ENCODE measurements at regions of chr12 and their contacts with region 1.

Region 1: GRCh38 chr12:15276088-15276698 is 46.1 kb upstream of the PTPRO start:
- DNase-seq: peak in 3 of 10 donors; percentile 22 to 48 (median 32)

Region 2: DNA sequence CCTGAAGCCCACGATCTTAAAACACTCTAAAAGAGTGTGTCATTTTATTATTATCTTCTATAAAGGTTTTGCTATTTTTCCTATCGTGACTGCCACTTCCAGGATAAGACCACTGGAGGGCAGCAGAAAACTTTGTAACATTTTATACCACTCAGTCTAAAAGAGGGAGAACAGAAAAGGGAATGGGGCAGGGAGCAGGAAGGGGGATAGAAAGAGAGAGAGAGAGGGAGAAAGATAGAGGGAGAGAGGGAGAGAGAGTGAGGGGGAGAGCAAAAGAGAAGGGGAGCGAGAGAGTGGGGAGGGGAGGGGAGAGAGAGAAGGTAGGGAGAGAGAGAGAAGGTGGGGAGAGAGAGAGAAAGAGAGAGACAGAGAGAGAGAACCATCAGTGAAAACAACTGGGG is 430.8 kb before region 1 on chr12:
- intact Hi-C with region 1: loop called (anchors 10 kb)
- DNase-seq: peak in 3 of 10 donors; percentile 24 to 40 (median 31)

Region 3: GRCh38 chr12:15522565-15523187 is 246.5 kb after region 1 on chr12:
- intact Hi-C with region 1: loop called (anchors 1 kb)
- DNase-seq: no peak

Region 4: DNA sequence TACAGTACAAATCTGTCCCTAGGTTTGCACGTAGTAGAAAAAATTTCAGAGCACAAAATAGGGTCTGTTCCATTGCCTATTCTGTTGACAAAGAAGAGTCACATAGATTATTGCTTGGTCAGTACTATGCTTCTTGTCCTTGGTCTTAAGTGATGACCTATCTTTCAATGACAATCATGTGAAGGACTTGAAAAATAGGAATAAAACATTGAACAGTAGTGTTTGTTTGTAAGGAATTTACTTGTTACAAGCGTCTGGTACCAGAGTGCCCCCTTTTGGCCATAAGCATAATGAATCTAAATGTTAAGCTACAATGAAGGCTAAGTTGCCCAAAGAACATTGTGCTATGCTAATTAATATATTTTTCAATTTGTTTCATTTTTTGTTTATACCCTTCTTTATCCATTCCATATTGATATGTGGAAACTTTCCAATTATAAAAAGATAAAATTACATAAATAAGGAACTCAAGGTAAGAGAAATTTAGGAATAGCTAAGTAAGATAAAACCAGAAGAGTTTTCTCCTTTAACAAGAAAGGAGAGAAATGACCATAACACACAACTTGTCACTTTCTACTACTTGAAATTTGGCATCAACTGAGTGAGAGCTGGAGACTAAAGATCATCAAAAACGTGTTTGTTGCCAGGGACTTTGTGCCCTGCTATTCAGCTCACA is 308.3 kb after region 1 on chr12:
- intact Hi-C with region 1: loop called (anchors 2 kb)
- DNase-seq: peak in 1 of 10 donors; percentile 36

Region 5: DNA sequence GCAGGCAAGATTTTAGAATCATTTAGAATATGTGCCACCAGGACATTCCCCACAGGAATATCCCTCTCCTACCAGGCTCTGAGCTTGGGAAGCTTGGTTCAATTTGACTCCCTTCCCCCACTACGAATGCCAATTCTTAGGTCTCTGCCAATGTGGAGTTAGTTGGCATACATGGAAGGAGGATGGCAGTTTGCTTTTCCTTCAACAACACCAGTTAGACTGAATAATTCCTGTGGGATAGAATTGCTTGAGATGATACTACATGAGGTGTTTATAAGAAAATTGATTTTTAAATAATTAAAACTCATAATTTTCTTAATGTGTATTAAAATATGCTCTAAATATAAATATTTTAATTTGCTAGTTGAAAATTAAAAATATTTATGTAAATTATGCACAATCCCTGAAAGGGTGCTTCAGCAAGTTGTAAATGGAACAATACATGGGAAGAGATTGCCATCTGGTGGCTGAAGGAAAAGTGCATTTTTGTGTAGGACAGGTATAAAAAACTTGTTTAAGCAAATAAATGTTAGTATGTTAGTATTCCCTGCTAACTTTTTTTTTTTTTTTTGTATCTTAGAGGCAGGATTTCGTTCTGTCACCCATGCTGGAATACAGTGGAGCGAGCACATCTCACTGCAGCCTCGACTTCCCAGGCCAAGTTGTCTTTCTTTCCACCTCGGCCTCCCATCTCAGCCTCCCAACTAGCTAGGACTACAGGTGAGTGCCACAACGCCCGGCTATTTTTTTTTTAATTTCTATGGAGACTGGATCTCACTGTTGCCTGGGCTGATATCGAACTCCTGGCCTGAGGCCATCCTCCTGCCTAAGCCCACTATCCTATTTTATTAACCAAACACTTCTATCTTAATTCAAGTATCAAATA is 580.1 kb after region 1 on chr12:
- intact Hi-C with region 1: loop called (anchors 10 kb)
- DNase-seq: peak in 2 of 10 donors; percentile 18 to 50